K562 (cell line): ENCODE measurements at regions of chrX and their contacts with region 1.

Region 1: DNA sequence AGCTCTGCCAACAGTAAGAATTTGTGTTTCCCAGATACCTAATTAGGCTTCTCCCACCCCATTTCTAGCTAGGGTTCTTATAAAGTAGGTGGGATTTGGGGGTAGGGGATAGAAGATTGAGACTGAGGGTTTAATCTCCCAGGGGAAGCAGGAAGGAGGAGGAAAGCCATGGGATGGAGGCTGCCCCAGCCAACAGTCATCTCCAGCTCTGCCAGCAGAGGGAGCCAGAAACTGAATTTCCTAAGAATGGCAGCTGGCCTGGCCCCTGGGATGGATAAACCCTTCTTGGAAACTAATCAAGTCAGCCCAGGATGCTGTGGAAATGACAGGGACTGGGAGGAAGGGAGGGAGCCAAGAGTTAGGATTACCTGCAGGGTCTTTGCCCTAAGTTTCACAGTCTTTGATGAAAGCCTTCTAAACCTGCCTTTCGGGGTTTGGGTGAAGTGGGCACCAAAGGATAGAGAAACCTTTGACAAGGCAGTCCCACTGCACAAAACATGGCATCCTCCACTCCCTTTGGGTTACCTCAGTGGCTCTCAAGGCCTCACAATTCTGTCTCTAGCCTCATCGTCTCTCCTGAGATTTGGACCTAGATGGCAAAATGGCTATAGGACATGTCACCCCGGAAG is 6.7 kb upstream of the ERCC6L start:
- DNase-seq: peak; percentile 67 to 72 (median 70)
- ATAC-seq: peak; percentile 88
- H3K4me3 ChIP-seq: no peak overlapping the region
- H3K27ac ChIP-seq: no peak overlapping the region
- H3K4me1 ChIP-seq: peaks cover 0 to 5% of the 10 kb centered on the region in 2 experiments; a peak in 3 of 5 replicates
- H3K27me3 ChIP-seq: no peaks in the 10 kb centered on the region
- CTCF ChIP-seq: peak; percentile 73 to 81 (median 80)
- EP300 ChIP-seq: no peak
- POLR2A ChIP-seq: no peak
- RAD21 ChIP-seq: peak; percentile 46 to 80; a peak in 3 of 4 replicates

Region 2: GRCh38 chrX:72381439-72382201 is 136.0 kb after region 1 on chrX:
- CTCF ChIA-PET with region 1: no interaction called
- POLR2A ChIA-PET with region 1: no interaction called
- in situ Hi-C with region 1: no loop called
- intact Hi-C with region 1: loop called (anchors 10 kb)
- DNase-seq: no peak
- ATAC-seq: no peak
- H3K4me3 ChIP-seq: no peak overlapping the region
- H3K27ac ChIP-seq: no peak overlapping the region
- H3K4me1 ChIP-seq: no peaks in the 10 kb centered on the region; a peak in 1 of 5 replicates
- H3K27me3 ChIP-seq: no peaks in the 10 kb centered on the region
- CTCF ChIP-seq: no peak
- EP300 ChIP-seq: peak; percentile 38; the same call in 1 of the 2 replicates
- POLR2A ChIP-seq: no peak
- RAD21 ChIP-seq: no peak

Region 3: GRCh38 chrX:72492499-72492898 is 246.9 kb after region 1 on chrX:
- CTCF ChIA-PET with region 1: no interaction called
- POLR2A ChIA-PET with region 1: no interaction called
- in situ Hi-C with region 1: no loop called
- intact Hi-C with region 1: no loop called
- DNase-seq: no peak
- ATAC-seq: no peak
- H3K4me3 ChIP-seq: no peak overlapping the region
- H3K27ac ChIP-seq: no peak overlapping the region
- H3K4me1 ChIP-seq: no peaks in the 10 kb centered on the region
- H3K27me3 ChIP-seq: no peaks in the 10 kb centered on the region
- CTCF ChIP-seq: no peak
- EP300 ChIP-seq: no peak
- POLR2A ChIP-seq: no peak
- RAD21 ChIP-seq: no peak